Activated CD8-positive, alpha-beta T cell treated with anti-CD3 and anti-CD28 coated beads, Interleukin-2, amount 10 ng/mL, durations not matched to agents 7 days and 5 days (primary cell): ENCODE measurements at regions of chr11 and their contacts with region 1.

Region 1: DNA sequence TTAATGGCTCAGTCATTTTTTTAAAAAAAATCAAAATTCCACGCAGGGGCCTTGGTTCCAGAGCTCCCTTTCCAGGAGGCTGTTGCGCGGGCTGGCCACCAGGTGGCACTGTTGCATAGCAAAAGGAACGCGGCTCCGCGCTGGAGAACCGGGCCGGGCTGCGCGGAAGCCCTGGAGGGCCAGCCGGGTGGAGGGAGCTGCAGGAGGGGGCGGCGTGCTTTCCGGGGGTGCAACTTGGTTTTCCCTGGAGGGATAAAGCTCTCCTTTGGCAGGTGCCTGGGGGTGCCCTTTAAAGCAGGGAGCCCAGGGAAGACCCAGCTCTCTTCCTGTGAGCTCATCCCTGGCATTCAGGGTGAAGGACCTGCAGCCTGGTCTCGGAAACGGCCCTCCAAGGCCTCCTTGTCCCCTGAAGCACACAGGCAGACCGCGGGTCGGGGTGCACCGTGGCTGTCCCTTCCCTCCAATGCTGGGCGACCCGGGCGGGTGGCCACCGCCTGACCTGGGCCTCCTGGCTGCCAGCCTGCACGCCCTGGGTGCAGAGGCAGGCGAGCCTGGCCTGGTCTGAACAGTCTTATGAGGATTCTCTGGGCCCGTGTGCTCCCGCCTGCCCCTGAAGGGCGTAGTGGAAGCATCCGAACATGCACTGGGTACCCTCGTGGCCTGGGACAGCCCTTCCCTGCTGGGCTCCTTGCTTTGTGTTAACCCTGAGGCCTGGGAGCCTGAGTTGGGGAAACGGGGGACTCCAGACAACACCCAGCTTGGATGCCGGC is 23.4 kb downstream of the KRTAP5-5 start:
- DNase-seq: peak; percentile 81
- ATAC-seq: peak; percentile 84
- H3K4me3 Mint-ChIP-seq: no peak overlapping the region
- H3K27ac Mint-ChIP-seq: no peak overlapping the region
- H3K4me1 Mint-ChIP-seq: no peaks in the 10 kb centered on the region
- H3K27me3 Mint-ChIP-seq: peaks cover 13% of the 10 kb centered on the region

Region 2: GRCh38 chr11:1422481-1422880 is 230.5 kb before region 1 on chr11:
- CTCF ChIA-PET with region 1: no interaction called
- POLR2A ChIA-PET with region 1: no interaction called
- DNase-seq: no peak
- ATAC-seq: no peak
- H3K4me3 Mint-ChIP-seq: no peak overlapping the region
- H3K27ac Mint-ChIP-seq: no peak overlapping the region
- H3K4me1 Mint-ChIP-seq: no peaks in the 10 kb centered on the region
- H3K27me3 Mint-ChIP-seq: no peaks in the 10 kb centered on the region

Region 3: GRCh38 chr11:1572197-1573076 is 80.5 kb before region 1 on chr11 and contains the start of gene DUSP8:
- CTCF ChIA-PET with region 1: interaction called, 10 read pairs
- POLR2A ChIA-PET with region 1: no interaction called
- DNase-seq: peak; percentile 92
- ATAC-seq: peak; percentile 70
- H3K4me3 Mint-ChIP-seq: no peak within 1 kb of the TSS
- H3K27ac Mint-ChIP-seq: no peak within 1 kb of the TSS
- H3K4me1 Mint-ChIP-seq: peaks cover 15% of the 10 kb centered on the region
- H3K27me3 Mint-ChIP-seq: peaks cover 32% of the 10 kb centered on the region
- total RNA-seq, gene DUSP8: 0.13 TPM

Region 4: GRCh38 chr11:1640076-1640946 is 12.6 kb before region 1 on chr11:
- CTCF ChIA-PET with region 1: interaction called, 49 read pairs
- POLR2A ChIA-PET with region 1: no interaction called
- DNase-seq: peak; percentile 32
- ATAC-seq: peak; percentile 64
- H3K4me3 Mint-ChIP-seq: no peak overlapping the region
- H3K27ac Mint-ChIP-seq: no peak overlapping the region
- H3K4me1 Mint-ChIP-seq: no peaks in the 10 kb centered on the region
- H3K27me3 Mint-ChIP-seq: peaks cover 8% of the 10 kb centered on the region

Region 5: GRCh38 chr11:1832211-1832919 is 179.4 kb after region 1 on chr11:
- CTCF ChIA-PET with region 1: interaction called, 67 read pairs
- POLR2A ChIA-PET with region 1: no interaction called
- DNase-seq: peak; percentile 68
- ATAC-seq: peak; percentile 71
- H3K4me3 Mint-ChIP-seq: no peak overlapping the region
- H3K27ac Mint-ChIP-seq: no peak overlapping the region
- H3K4me1 Mint-ChIP-seq: no peaks in the 10 kb centered on the region
- H3K27me3 Mint-ChIP-seq: peaks cover 4% of the 10 kb centered on the region

Region 6: GRCh38 chr11:2002807-2003206 is 349.9 kb after region 1 on chr11:
- CTCF ChIA-PET with region 1: interaction called, 19 read pairs
- POLR2A ChIA-PET with region 1: no interaction called
- DNase-seq: no peak
- ATAC-seq: peak; percentile 57
- H3K4me3 Mint-ChIP-seq: no peak overlapping the region
- H3K27ac Mint-ChIP-seq: no peak overlapping the region
- H3K4me1 Mint-ChIP-seq: no peaks in the 10 kb centered on the region
- H3K27me3 Mint-ChIP-seq: no peaks in the 10 kb centered on the region